Naive thymus-derived CD4-positive, alpha-beta T cell (primary cell): ENCODE measurements at regions of chr1 and their contacts with region 1.

Region 1: DNA sequence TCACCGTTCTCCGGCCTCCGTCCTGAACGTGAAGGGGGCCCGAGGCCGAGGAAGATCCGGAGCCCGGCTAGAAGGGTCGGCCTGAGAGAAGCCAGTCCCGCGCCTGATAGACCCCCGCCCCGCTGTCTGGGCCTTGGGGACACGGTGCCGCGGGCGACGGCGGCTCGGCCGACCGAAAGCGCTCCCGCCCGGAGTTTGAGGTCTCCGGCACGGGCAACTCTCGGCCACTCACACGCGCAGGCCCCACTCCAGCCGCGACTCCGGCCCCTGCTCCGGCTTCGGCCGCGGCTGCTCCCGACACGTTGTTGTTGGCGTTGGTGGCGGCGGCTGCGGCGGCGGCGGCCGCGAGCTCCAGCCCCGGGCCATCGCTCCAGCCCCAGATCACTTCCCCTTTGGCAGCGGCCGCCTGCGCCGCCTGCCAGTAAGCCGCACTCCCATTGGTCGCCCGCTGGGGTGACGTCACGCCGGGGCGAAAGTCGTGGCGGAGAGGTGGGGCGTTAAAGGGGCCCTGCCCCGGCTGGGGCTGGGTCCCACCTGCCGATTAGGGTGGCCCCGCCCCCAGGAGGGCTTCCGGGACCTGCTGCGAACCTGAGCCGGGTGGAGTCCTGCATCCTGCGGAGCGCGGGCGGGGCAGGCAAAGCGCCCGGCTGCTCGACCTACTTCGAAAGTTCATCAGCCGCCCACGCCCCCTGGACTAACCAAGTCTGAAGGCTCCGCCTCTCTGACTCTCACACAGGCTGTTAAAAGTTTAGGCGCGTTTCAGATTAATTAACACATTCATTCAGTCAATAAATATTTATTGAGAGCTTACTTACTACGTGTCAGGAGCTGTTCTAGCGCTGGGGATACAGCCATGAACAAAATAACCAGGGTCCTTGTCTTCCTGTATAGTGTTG is at the start of gene EFCAB14:
- DNase-seq: peak; percentile 98 to 100 (median 100)
- ATAC-seq: peak; percentile 99
- H3K4me3 ChIP-seq: peak within 1 kb of the TSS; percentile 78
- H3K4me3 Mint-ChIP-seq: peak within 1 kb of the TSS; percentile 86 to 96 (median 91)
- H3K27ac ChIP-seq: peak within 1 kb of the TSS; percentile 91
- H3K27ac Mint-ChIP-seq: peak within 1 kb of the TSS; percentile 80 to 96 (median 93)
- H3K4me1 ChIP-seq: peaks cover 20 to 28% of the 10 kb centered on the region in 2 donors
- H3K4me1 Mint-ChIP-seq: peaks cover 38 to 52% (median 43%) of the 10 kb centered on the region in 7 donors
- H3K27me3 ChIP-seq: no peaks in the 10 kb centered on the region
- H3K27me3 Mint-ChIP-seq: no peaks in the 10 kb centered on the region
- total RNA-seq, gene EFCAB14: 64.5 to 98.2 (median 89.5) TPM

Region 2: GRCh38 chr1:46247436-46248121 is 471.4 kb before region 1 on chr1 and contains the start of gene RAD54L:
- CTCF ChIA-PET with region 1: no interaction called
- POLR2A ChIA-PET with region 1: no interaction called
- intact Hi-C with region 1: loop called in 1 of 2 experiments (anchors 1 kb)
- DNase-seq: peak; percentile 83 to 97 (median 95)
- ATAC-seq: peak; percentile 99
- H3K4me3 ChIP-seq: peak within 1 kb of the TSS; percentile 89
- H3K4me3 Mint-ChIP-seq: peak within 1 kb of the TSS; percentile 86 to 100 (median 94)
- H3K27ac ChIP-seq: peak within 1 kb of the TSS; percentile 66
- H3K27ac Mint-ChIP-seq: peak within 1 kb of the TSS; percentile 62 to 96 (median 78)
- H3K4me1 ChIP-seq: peaks cover 4 to 8% of the 10 kb centered on the region in 2 donors
- H3K4me1 Mint-ChIP-seq: peaks cover 0 to 41% (median 17%) of the 10 kb centered on the region in 7 donors
- H3K27me3 ChIP-seq: no peaks in the 10 kb centered on the region
- H3K27me3 Mint-ChIP-seq: no peaks in the 10 kb centered on the region
- total RNA-seq, gene RAD54L: 0.94 to 31.9 (median 2.1) TPM

Region 3: GRCh38 chr1:46616277-46617107 is 102.5 kb before region 1 on chr1 and contains the start of gene MOB3C:
- CTCF ChIA-PET with region 1: no interaction called
- POLR2A ChIA-PET with region 1: interaction called, 5 read pairs
- intact Hi-C with region 1: loop called (anchors 1 kb)
- DNase-seq: peak; percentile 41 to 79 (median 62)
- ATAC-seq: peak; percentile 83
- H3K4me3 ChIP-seq: peak within 1 kb of the TSS; percentile 74
- H3K4me3 Mint-ChIP-seq: peak within 1 kb of the TSS; percentile 90 to 96 (median 93)
- H3K27ac ChIP-seq: peak within 1 kb of the TSS; percentile 94
- H3K27ac Mint-ChIP-seq: peak within 1 kb of the TSS; percentile 88 to 96 (median 93)
- H3K4me1 ChIP-seq: peaks cover 31 to 34% of the 10 kb centered on the region in 2 donors
- H3K4me1 Mint-ChIP-seq: peaks cover 14 to 68% (median 51%) of the 10 kb centered on the region in 7 donors
- H3K27me3 ChIP-seq: no peaks in the 10 kb centered on the region
- H3K27me3 Mint-ChIP-seq: no peaks in the 10 kb centered on the region
- total RNA-seq, gene MOB3C: 12.1 to 25.8 (median 25.2) TPM

Region 4: DNA sequence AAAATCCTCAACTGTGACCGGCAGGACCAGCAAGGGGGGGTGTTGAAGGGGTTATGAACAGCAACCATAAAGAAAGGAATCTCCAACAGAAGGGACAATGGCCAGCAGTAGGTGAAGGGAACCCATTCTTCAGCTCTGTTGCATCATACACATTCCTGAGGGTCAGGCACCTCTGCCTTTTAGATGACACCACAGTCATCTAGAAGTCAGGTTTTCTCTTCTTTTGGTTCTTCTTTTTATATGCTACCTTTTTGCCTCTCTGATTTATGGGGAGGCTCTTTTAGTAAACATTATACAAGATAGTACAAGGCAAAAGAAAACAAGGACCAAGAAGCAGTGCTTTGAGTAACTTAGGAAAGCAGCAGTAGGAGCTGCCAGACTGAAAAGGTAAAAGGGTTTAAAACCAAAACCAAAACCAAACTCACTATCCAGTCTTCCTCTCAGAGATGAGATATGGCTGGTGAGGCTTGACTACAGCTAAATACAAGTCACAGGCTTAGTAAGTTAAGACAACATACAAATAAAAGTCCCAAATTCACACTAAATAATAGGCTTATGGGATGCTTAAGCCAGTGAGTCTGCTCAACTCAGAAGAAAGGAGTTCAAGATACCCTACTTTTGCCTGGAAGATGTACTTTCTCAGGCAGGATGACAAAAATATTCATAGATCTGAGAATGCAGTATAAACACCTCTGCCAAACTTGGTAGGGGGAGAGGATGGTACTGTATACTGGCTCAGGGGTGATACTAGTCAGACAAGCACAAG is 43.2 kb before region 1 on chr1:
- CTCF ChIA-PET with region 1: no interaction called
- POLR2A ChIA-PET with region 1: interaction called, 5 read pairs
- intact Hi-C with region 1: loop called in 1 of 2 experiments (anchors 2 kb)
- DNase-seq: peak in 5 of 9 donors; percentile 11 to 36 (median 28)
- ATAC-seq: peak; percentile 76
- H3K4me3 ChIP-seq: peak overlapping the region; percentile 21
- H3K4me3 Mint-ChIP-seq: peak overlapping the region; percentile 42 to 79 (median 72)
- H3K27ac ChIP-seq: peak overlapping the region; percentile 71
- H3K27ac Mint-ChIP-seq: peak overlapping the region; percentile 90 to 98 (median 94)
- H3K4me1 ChIP-seq: peaks cover 14 to 18% of the 10 kb centered on the region in 2 donors
- H3K4me1 Mint-ChIP-seq: peaks cover 9 to 36% (median 28%) of the 10 kb centered on the region in 7 donors
- H3K27me3 ChIP-seq: no peaks in the 10 kb centered on the region
- H3K27me3 Mint-ChIP-seq: no peaks in the 10 kb centered on the region

Region 5: DNA sequence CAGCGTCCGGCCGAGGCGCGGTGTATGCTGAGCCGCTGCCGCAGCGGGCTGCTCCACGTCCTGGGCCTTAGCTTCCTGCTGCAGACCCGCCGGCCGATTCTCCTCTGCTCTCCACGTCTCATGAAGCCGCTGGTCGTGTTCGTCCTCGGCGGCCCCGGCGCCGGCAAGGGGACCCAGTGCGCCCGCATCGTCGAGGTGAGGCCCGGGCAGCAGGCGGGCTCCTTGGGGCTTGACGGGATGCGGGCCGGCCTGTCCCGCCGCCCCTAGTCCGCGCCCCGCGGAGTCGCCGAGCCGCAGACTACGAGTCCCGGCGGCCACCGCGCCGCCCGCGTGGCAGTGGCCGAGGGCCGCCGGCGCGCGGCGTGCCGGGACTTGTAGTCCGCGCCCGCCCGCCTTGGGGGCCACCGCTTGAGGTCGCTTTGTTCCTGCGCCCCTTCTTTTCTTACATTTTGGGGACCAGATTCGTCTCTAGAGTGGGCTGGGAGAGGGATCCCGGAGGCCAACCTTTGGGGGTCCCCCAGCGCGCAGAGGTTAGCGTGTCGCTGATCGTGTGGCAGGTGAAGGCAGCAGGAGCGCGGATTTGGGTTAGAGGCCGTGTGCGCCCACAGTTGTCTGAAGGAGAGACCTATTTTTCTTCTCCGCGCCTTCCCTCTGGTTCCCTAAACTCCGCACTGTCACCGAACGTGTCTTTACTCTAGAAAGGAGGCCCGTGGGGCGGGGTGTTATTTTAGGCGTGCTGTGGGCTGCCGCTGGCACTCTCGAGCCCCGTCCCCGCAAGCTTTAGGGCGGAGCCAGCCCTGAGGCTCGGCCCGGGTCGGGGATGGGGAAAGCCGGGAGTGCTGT is 615.2 kb after region 1 on chr1:
- CTCF ChIA-PET with region 1: no interaction called
- POLR2A ChIA-PET with region 1: no interaction called
- intact Hi-C with region 1: loop called in 1 of 2 experiments (anchors 5 kb)
- DNase-seq: peak; percentile 63 to 82 (median 77)
- ATAC-seq: peak; percentile 93
- H3K4me3 ChIP-seq: peak overlapping the region; percentile 87
- H3K4me3 Mint-ChIP-seq: peak overlapping the region in 6 of 10 donors; percentile 90 to 94 (median 92)
- H3K27ac ChIP-seq: peak overlapping the region; percentile 92
- H3K27ac Mint-ChIP-seq: peak overlapping the region in 6 of 9 donors; percentile 76 to 94 (median 92)
- H3K4me1 ChIP-seq: peaks cover 6 to 16% of the 10 kb centered on the region in 2 donors
- H3K4me1 Mint-ChIP-seq: peaks cover 12 to 34% (median 22%) of the 10 kb centered on the region in 7 donors
- H3K27me3 ChIP-seq: no peaks in the 10 kb centered on the region
- H3K27me3 Mint-ChIP-seq: no peaks in the 10 kb centered on the region